Esophagus muscularis mucosa (tissue), 4 donors: ENCODE measurements at regions of chr14 and their contacts with region 1.

Region 1: GRCh38 chr14:23051141-23052057 is 5.9 kb downstream of the CDH24 start:
- DNase-seq: no peak
- H3K4me3 ChIP-seq: no peak overlapping the region
- H3K27ac ChIP-seq: no peak overlapping the region
- H3K4me1 ChIP-seq: peaks cover 9 to 10% (median 10%) of the 10 kb centered on the region in 4 donors
- H3K27me3 ChIP-seq: peaks cover 0 to 6% (median 0%) of the 10 kb centered on the region in 4 donors
- CTCF ChIP-seq: no peak
- EP300 ChIP-seq: no peak
- POLR2A ChIP-seq: no peak

Region 2: GRCh38 chr14:22994762-22995275 is 56.6 kb before region 1 on chr14:
- intact Hi-C with region 1: loop called (anchors 2 kb)
- DNase-seq: no peak
- H3K4me3 ChIP-seq: no peak overlapping the region
- H3K27ac ChIP-seq: no peak overlapping the region
- H3K4me1 ChIP-seq: peaks cover 0 to 10% (median 8%) of the 10 kb centered on the region in 4 donors
- H3K27me3 ChIP-seq: no peaks in the 10 kb centered on the region
- CTCF ChIP-seq: peak; percentile 36 to 53 (median 47)
- EP300 ChIP-seq: no peak
- POLR2A ChIP-seq: no peak